ENCODE measurements at regions of chr3 and their contacts with region 1.

Region 1: DNA sequence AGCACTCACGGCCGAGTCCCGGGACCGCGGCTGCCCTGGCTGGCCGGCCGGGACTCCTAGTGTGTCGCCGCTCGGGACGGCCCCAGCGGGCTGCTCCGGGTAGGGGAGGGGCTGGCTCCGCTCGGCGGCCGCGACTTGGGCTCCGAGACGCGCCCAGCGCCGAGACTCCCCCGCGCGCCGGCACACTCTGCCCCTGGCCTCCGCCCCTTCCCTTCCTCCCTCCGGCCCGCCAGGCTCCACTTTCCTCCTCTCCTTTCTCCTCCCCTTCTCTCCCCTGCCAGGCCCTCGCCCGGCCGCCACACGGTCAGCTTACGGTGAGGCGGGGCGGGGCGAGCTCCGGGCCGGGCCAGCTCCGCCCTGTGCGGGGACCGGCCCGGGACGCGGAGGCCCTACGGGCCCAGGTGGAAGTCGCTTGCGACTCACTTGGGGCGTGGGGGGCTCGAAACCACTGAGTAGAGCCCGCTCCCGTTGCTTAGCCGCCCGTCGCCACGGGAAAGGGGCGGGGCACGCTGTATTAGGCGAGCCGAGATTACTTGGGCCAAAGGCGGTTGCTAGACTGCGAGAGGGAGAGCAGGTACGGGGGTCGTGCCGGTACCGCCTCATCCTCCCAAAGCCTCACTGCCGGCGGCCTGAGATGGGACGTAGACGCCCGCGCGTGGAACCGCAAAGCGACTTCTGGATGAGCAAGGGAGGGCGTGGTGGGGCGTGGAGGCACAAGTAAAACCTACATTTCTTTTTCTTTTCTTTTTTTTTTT is at the start of gene ITGB5:
- DNase-seq: peak; percentile 90 to 92 (median 92)
- ATAC-seq: peak; percentile 82 to 92 (median 87)
- H3K4me3 ChIP-seq: peak within 1 kb of the TSS; percentile 70 to 72 (median 72)
- H3K27ac ChIP-seq: peak within 1 kb of the TSS; percentile 89 to 94 (median 92)
- H3K4me1 ChIP-seq: peaks cover 0 to 14% (median 0%) of the 10 kb centered on the region in 4 donors
- H3K27me3 ChIP-seq: no peaks in the 10 kb centered on the region
- CTCF ChIP-seq: no peak
- POLR2A ChIP-seq: peak; percentile 91
- total RNA-seq, gene ITGB5: 61.3 to 125 (median 98.4) TPM

Region 2: DNA sequence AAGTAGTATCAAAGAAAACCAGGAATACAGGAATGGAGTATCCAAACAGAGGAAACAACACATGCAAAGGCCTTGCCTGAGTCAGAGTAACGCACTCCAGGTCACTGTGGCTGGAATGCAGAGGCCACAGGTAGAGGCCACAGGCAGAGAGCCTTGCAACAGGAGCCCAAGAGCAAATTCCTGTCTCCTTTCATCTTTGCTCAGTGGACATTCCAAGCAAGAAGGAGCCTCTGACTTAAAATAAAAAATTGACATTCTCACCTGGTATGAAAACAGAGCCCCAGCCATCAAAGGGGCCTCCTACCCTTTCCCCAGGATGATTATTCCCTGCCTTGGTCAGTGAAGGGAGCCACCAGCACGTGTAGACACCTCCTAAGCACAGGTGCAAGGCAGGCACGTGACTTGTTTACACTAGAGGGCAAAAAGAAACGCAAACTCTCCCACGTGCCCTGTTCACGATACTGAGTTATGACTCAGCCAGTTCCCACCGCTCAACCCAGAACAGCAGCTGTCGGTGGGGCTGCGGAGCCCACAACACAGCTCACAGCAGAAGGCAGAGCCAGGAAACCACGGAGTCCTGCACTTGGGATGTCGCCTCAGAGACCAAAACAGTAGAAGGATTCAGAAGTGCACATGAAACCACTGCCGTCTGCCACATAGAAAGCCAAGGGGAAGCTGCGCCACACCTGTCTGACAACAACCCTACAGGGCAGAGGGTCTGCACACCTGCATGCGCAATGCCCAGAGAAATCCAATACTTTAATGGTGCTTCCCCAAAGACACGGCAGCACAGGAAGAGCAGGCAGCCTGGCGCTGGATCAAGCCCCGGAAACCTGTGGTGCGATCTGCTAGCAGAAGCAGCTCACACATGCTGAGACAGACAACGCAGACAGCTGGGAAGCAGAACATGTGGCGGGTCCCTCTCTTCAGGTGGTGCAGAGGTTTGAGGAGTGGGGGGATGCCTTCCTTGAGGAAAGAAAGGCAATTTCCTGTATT is 52.3 kb before region 1 on chr3:
- intact Hi-C with region 1: loop called in 1 of 2 experiments (anchors 10 kb)
- DNase-seq: peak; percentile 65 to 94 (median 89)
- ATAC-seq: peak; percentile 47 to 68 (median 58)
- H3K4me3 ChIP-seq: peak overlapping the region in 2 of 3 donors; percentile 35 to 46
- H3K27ac ChIP-seq: peak overlapping the region; percentile 81 to 95 (median 82)
- H3K4me1 ChIP-seq: peaks cover 0 to 60% (median 42%) of the 10 kb centered on the region in 4 donors
- H3K27me3 ChIP-seq: no peaks in the 10 kb centered on the region
- CTCF ChIP-seq: peak in 1 of 4 donors; percentile 16
- POLR2A ChIP-seq: peak; percentile 87